ENCODE measurements at regions of chr4 and their contacts with region 1.

Region 1: GRCh38 chr4:46844325-46844917 is 64.6 kb downstream of the COX7B2 start:
- DNase-seq: peak; percentile 15
- H3K4me3 ChIP-seq: no peak overlapping the region
- H3K27ac ChIP-seq: no peak overlapping the region
- H3K27me3 ChIP-seq: no peaks in the 10 kb centered on the region
- CTCF ChIP-seq: peak; percentile 74

Region 2: GRCh38 chr4:46878641-46879040 is 34.2 kb after region 1 on chr4:
- CTCF ChIA-PET with region 1: no interaction called
- POLR2A ChIA-PET with region 1: no interaction called
- DNase-seq: no peak
- H3K4me3 ChIP-seq: no peak overlapping the region
- H3K27ac ChIP-seq: no peak overlapping the region
- H3K27me3 ChIP-seq: no peaks in the 10 kb centered on the region
- CTCF ChIP-seq: no peak

Region 3: DNA sequence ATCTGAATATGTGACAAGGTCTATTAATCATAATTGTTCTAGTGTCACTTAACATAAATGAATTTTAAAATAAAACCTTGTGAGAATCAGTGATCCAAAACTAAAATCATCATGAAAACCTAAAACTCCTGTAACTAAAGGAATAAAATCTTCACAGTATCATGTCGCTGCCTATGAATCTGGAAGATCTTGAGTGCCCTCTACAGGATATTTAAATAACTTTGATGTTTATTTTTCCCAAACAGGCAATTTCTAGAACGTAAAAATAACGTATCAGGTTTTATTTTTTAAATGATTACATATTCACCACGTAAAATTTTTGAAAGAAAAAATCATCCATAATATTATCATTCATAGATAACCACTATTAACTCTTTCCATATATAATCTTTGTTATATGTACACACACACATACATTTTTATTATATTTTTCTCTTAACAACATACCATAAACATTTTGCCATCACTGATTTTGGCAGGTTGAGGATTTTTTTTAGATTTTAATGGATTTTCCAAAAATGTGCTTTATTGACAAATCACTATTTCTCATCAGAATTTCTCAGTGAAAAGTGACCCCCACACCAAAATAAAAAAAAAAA is 539.5 kb after region 1 on chr4:
- CTCF ChIA-PET with region 1: interaction called, 19 read pairs
- POLR2A ChIA-PET with region 1: no interaction called
- DNase-seq: peak; percentile 21
- H3K4me3 ChIP-seq: no peak overlapping the region
- H3K27ac ChIP-seq: no peak overlapping the region
- H3K27me3 ChIP-seq: no peaks in the 10 kb centered on the region
- CTCF ChIP-seq: peak; percentile 56

Measured in AG04450 (cell line).